Right ventricle myocardium superior (tissue), 1 donor: ENCODE measurements at regions of chr12 and their contacts with region 1.

Region 1: GRCh38 chr12:89019408-89020120 is 332.7 kb downstream of the DUSP6 start:
- DNase-seq: peak; percentile 60
- ATAC-seq: peak; percentile 99

Region 2: DNA sequence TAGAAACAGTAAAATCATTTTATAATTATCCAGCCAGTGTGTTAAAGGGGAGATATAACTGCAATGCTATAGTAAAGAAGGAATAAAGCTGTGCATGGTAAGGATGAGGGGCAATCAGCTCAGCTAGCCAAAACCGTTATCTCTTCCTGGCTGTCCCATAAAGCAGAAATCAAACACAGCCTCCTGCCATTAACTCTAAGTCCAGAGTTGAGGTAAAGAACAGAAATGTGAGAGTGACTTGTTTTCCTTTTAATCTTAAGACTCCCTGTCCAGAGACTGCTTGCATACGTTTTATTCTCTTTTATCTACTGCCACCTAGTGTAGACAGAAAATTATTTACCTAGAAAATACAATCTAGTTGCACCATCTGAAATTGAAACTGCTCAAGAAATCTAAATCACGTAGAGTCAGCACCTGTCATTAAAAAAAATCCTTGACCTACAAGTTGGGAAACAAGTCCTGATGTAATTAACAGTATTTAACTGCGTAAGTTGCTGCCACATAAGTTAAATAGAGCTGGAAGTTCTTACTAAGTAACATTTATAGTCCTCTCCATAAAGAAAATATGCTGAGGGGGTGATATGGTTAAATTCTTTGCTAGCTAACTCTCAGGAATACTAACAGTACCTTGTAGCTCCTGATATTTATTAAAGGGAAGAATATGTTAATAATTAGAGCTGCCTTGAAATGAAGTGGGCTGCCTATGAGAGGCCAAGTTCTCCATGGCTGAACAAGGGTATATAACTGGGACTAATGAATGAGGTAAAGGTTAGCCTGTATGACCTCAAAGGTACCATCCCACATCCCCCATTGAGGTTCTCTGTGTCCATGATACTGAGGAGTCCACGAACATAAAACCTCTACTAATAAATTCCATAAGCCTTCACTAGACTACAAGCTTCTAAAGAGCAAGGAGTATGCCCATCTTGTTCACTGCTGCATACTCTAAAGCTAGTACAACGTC is 442.4 kb after region 1 on chr12:
- intact Hi-C with region 1: loop called (anchors 10 kb)
- DNase-seq: no peak
- ATAC-seq: peak; percentile 94

Region 3: DNA sequence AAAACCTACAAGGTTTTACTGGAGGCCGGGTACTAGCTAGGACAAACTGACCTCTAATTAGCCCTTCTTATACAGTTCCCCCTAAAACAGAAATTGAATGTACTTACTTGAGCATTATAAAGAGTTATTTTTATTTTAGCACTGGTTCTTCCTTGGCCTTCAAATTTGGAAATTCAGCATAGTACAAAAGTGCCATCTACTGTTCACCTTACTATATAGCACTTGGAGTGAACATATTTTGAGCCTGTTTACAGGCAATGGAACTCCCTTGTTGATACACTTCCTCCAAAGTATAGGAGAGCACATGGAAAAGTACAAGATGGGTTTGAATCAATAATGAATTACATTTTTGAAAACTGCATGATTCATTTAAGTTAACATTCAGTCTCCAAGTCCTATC is 510.2 kb after region 1 on chr12:
- intact Hi-C with region 1: loop called (anchors 2 kb)
- DNase-seq: no peak
- ATAC-seq: no peak